Right ventricle myocardium inferior (tissue), 1 donor: ENCODE measurements at regions of chr1 and their contacts with region 1.

Region 1: GRCh38 chr1:32773018-32773763 is 44.0 kb downstream of the YARS1 start:
- DNase-seq: peak; percentile 88
- ATAC-seq: peak; percentile 86

Region 2: GRCh38 chr1:32521165-32521564 is 252.0 kb before region 1 on chr1:
- intact Hi-C with region 1: loop called (anchors 2 kb)
- DNase-seq: no peak
- ATAC-seq: no peak